Activated CD4-positive, alpha-beta memory T cell treated with anti-CD3 and anti-CD28 coated beads for 36 hours (primary cell): ENCODE measurements at regions of chr6 and their contacts with region 1.

Region 1: GRCh38 chr6:155174576-155175211 is 89.1 kb upstream of the CLDN20 start:
- DNase-seq: peak; percentile 73
- H3K4me3 Mint-ChIP-seq: no peak overlapping the region
- H3K27ac Mint-ChIP-seq: peak overlapping the region; percentile 7
- H3K4me1 Mint-ChIP-seq: peaks cover 50% of the 10 kb centered on the region
- H3K27me3 Mint-ChIP-seq: no peaks in the 10 kb centered on the region

Region 2: DNA sequence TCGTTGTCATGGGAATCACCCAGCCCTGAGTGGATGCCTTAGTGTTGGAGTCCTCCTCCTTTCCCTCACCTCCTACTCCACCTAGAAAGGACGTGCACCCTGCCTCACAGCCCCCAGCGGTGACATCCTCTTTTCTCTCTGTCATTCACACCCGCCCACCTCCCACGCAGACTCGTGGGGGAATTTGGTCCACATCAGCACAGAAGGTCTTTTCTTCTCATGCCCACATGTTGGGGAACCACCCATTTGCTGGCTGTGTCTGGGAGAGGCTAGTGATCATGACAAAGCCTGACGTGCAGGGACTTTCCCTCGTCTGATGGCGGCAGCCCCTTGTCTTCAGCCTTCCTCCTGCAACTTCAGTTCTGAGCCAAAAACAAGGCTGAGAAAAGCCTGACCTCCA is 568.2 kb before region 1 on chr6:
- CTCF ChIA-PET with region 1: no interaction called
- POLR2A ChIA-PET with region 1: no interaction called
- intact Hi-C with region 1: loop called (anchors 1 kb)
- DNase-seq: peak; percentile 96
- H3K4me3 Mint-ChIP-seq: peak overlapping the region; percentile 24
- H3K27ac Mint-ChIP-seq: peak overlapping the region; percentile 67
- H3K4me1 Mint-ChIP-seq: peaks cover 43% of the 10 kb centered on the region
- H3K27me3 Mint-ChIP-seq: peaks cover 4% of the 10 kb centered on the region

Region 3: DNA sequence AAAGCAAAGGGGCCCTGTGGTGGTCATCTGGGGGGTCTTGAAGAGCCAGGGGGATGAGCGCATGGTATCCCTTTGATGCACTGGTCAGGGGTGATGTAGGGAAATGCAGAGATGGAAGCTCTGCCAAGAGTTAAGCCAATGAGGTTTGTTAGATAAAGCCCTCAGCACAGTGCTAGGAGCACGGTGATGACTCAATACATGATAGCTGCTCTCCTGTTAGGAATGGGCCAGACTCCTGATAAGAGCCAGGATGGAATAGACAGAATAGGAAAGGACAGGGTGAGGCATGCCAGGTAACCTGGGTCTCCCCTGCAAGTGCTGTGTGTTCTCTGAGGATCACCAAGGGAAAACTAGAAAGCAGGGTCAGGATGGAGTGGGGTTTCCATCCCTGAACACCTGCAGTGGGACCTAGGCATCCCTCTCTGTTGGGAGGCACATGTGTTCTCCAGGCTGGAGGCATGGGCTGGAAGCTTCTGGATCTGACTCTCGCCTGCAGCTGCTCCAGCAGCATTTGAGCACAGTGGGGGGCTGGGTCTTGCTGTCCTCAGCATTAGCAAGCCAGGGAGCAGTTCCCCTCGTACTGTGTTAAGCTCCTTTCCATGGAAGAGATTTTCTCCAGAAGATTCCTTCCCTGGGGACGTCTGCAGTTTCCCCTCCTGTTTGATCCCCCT is 251.4 kb before region 1 on chr6:
- CTCF ChIA-PET with region 1: interaction called, 102 read pairs
- POLR2A ChIA-PET with region 1: no interaction called
- intact Hi-C with region 1: loop called (anchors 1 kb)
- DNase-seq: no peak
- H3K4me3 Mint-ChIP-seq: no peak overlapping the region
- H3K27ac Mint-ChIP-seq: no peak overlapping the region
- H3K4me1 Mint-ChIP-seq: peaks cover 8% of the 10 kb centered on the region
- H3K27me3 Mint-ChIP-seq: no peaks in the 10 kb centered on the region

Region 4: GRCh38 chr6:155117266-155117665 is 57.4 kb before region 1 on chr6:
- CTCF ChIA-PET with region 1: no interaction called
- POLR2A ChIA-PET with region 1: interaction called, 7 read pairs
- intact Hi-C with region 1: loop called (anchors 1 kb)
- DNase-seq: no peak
- H3K4me3 Mint-ChIP-seq: no peak overlapping the region
- H3K27ac Mint-ChIP-seq: peak overlapping the region; percentile 42
- H3K4me1 Mint-ChIP-seq: peaks cover 23% of the 10 kb centered on the region
- H3K27me3 Mint-ChIP-seq: peaks cover 2% of the 10 kb centered on the region

Region 5: DNA sequence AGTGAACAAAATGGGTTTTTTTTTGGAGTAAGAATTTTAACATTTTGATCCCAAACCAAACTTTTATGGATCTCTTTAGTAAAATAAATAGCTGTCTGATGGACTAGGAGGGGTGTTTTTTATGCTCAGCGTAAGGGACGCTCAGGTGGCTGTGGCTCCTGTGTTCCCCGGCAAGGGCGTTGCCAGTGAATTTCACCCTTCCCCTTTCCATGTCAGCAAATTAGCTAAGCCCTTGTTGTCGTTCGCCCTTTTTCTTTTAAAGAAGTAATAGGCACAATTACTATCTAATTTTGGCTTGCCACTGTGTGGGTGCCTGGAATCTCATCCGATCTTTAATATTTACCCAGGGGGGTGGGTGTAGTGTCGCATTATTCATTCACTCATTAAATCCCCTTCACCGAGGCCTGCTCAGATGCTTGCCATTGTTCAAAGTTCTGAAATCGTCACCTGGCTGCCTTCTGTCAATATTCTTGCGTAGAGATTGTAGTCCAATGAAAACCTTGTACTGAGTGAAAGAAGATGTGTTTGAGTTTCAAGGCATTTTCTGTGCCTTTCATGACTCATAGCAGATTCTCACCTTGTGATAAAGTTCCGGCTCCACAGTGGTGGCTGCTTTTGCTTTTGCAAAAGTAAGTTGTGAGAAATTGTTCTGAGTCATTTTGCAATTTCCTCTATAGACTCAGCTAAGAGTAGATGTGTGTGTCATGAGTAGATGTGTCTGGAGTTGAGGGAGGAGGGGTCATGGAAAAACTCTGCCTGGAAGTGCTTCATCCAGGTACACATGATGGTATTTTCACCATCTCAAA is 49.2 kb after region 1 on chr6:
- CTCF ChIA-PET with region 1: interaction called, 7 read pairs
- POLR2A ChIA-PET with region 1: no interaction called
- intact Hi-C with region 1: loop called (anchors 1 kb)
- DNase-seq: peak; percentile 78
- H3K4me3 Mint-ChIP-seq: peak overlapping the region; percentile 40
- H3K27ac Mint-ChIP-seq: peak overlapping the region; percentile 75
- H3K4me1 Mint-ChIP-seq: peaks cover 17% of the 10 kb centered on the region
- H3K27me3 Mint-ChIP-seq: peaks cover 6% of the 10 kb centered on the region

Region 6: GRCh38 chr6:155273431-155273830 is 98.7 kb after region 1 on chr6:
- CTCF ChIA-PET with region 1: interaction called, 6 read pairs
- POLR2A ChIA-PET with region 1: no interaction called
- intact Hi-C with region 1: loop called (anchors 1 kb)
- DNase-seq: no peak
- H3K4me3 Mint-ChIP-seq: no peak overlapping the region
- H3K27ac Mint-ChIP-seq: no peak overlapping the region
- H3K4me1 Mint-ChIP-seq: peaks cover 4% of the 10 kb centered on the region
- H3K27me3 Mint-ChIP-seq: no peaks in the 10 kb centered on the region